Activated CD8-positive, alpha-beta memory T cell treated with anti-CD3 and anti-CD28 coated beads, Interleukin-2, amount 10 ng/mL, durations not matched to agents 7 days and 5 days (primary cell): ENCODE measurements at regions of chr11 and their contacts with region 1.

Region 1: DNA sequence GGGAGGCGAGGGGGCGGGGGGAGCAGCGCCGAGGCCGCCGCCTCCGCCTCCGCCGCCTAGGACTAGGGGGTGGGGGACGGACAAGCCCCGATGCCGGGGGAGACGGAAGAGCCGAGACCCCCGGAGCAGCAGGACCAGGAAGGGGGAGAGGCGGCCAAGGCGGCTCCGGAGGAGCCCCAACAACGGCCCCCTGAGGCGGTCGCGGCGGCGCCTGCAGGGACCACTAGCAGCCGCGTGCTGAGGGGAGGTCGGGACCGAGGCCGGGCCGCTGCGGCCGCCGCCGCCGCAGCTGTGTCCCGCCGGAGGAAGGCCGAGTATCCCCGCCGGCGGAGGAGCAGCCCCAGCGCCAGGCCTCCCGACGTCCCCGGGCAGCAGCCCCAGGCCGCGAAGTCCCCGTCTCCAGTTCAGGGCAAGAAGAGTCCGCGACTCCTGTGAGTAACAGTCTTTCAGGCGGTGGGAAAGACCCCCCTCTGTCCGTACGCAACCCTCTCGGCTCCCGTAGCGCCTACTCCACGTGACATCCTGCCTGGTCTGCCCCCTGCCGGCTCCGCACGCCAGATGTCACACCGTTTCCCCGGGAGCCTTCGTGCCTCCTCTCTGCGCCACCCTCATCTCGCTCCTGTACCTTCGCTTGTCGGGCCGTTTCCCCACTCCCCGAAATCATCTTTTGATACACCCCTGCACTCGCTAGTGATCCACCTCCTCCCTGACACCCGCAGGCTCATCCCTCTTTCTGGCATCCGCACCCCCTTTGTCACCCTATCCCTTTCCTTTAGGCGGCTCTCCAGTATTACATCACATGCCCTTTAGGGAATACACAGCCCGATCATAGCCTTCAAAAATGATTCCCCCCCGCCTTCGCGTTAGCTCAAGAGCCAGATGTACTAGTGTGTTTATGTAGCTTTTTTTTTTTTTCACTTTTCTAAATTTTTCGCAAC is 598 bp downstream of the ZFP91 start:
- DNase-seq: peak; percentile 94
- ATAC-seq: peak; percentile 52
- H3K4me3 Mint-ChIP-seq: peak overlapping the region; percentile 99
- H3K27ac Mint-ChIP-seq: peak overlapping the region; percentile 97
- H3K4me1 Mint-ChIP-seq: peaks cover 47% of the 10 kb centered on the region
- H3K27me3 Mint-ChIP-seq: no peaks in the 10 kb centered on the region

Region 2: DNA sequence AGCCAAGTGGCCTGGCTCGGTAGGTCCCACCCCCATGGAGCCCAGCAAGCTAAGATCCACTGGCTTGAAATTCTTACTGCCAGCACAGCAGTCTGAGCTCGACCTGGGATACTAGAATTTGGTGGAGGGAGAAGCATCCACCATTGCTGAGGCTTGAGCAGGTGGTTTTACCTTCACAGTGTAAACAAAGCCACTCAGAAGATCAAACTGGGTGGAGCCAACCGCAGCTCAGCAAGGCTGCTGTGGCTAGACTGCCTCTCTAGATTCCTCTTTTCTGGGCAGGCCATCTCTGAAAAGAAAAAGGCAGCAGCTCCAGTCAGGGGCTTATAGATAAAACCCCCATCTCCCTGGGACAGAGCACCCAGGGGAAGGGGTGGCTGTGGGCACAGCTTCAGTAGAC is 49.2 kb before region 1 on chr11:
- CTCF ChIA-PET with region 1: no interaction called
- DNase-seq: no peak
- ATAC-seq: peak; percentile 50
- H3K4me3 Mint-ChIP-seq: no peak overlapping the region
- H3K27ac Mint-ChIP-seq: no peak overlapping the region
- H3K4me1 Mint-ChIP-seq: peaks cover 38% of the 10 kb centered on the region
- H3K27me3 Mint-ChIP-seq: no peaks in the 10 kb centered on the region

Region 3: GRCh38 chr11:58567889-58568512 is 11.5 kb before region 1 on chr11:
- CTCF ChIA-PET with region 1: interaction called, 28 read pairs
- DNase-seq: peak; percentile 85
- ATAC-seq: peak; percentile 95
- H3K4me3 Mint-ChIP-seq: peak overlapping the region; percentile 38
- H3K27ac Mint-ChIP-seq: peak overlapping the region; percentile 78
- H3K4me1 Mint-ChIP-seq: peaks cover 71% of the 10 kb centered on the region
- H3K27me3 Mint-ChIP-seq: no peaks in the 10 kb centered on the region

Region 4: DNA sequence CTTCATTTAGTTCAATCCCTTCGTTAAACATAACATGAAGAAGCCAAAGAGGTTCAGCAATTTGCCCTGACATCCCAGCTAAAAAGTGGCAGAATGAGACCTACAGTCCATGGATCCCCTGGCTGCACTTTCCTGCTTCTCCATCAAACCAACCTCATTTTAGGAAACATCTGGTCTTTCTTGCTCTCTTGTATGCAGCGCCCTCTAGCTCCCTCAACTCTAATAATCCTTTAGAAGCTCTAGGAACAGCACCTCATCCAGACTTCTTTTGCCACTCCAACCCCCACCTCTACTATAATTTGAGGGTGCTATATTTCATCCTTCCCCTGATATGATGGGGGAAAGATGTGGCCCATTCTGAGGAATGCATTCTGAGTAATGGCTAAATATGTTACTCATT is 50.4 kb after region 1 on chr11:
- CTCF ChIA-PET with region 1: interaction called, 10 read pairs
- DNase-seq: no peak
- ATAC-seq: no peak
- H3K4me3 Mint-ChIP-seq: no peak overlapping the region
- H3K27ac Mint-ChIP-seq: no peak overlapping the region
- H3K4me1 Mint-ChIP-seq: no peaks in the 10 kb centered on the region
- H3K27me3 Mint-ChIP-seq: no peaks in the 10 kb centered on the region

Region 5: GRCh38 chr11:58711832-58712231 is 132.4 kb after region 1 on chr11:
- CTCF ChIA-PET with region 1: no interaction called
- DNase-seq: no peak
- ATAC-seq: no peak
- H3K4me3 Mint-ChIP-seq: no peak overlapping the region
- H3K27ac Mint-ChIP-seq: no peak overlapping the region
- H3K4me1 Mint-ChIP-seq: no peaks in the 10 kb centered on the region
- H3K27me3 Mint-ChIP-seq: peaks cover 5% of the 10 kb centered on the region